AG04450 (cell line): ENCODE measurements at regions of chr5 and their contacts with region 1.

Region 1: DNA sequence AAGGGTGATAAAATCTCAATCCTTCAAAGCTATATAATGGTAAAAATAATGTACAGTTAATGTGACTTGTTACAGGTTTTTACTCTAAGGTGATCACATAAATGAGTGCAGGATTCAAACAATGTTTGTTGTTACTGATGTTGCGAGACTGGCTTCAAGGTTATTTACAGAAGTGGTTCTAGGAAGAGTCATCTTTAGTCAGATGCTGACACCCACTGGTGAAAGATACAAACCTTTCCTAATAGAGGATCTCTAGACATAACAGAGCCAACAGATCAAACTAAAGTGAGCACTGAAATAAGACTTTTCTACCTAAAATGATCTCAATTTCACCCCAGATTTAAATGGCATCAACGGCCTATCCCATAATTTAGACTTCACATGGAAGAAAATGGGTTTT is 20.2 kb downstream of the ARSB start:
- DNase-seq: peak; percentile 59
- H3K4me3 ChIP-seq: no peak overlapping the region
- H3K27ac ChIP-seq: no peak overlapping the region
- H3K27me3 ChIP-seq: no peaks in the 10 kb centered on the region
- CTCF ChIP-seq: peak; percentile 63

Region 2: DNA sequence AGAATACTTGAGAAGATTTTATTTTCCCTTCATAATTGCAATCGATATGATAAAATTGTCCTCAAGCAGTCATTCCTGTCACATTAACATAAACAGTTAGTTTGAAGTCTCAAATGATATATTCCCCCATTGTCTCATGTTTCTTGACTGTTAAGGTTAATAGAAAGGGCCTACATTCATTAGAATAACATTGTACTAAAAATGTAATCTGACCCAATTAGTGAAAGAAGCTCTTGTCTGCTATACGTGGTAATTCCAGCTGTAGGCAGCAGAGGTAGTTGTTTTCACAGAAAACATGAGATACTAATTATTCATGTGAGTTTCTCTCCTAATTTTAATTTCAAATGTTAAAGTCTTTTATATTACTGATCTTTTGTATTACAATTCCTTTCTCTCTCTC is 644.5 kb before region 1 on chr5:
- CTCF ChIA-PET with region 1: interaction called, 12 read pairs
- POLR2A ChIA-PET with region 1: no interaction called
- DNase-seq: peak; percentile 26
- H3K4me3 ChIP-seq: no peak overlapping the region
- H3K27ac ChIP-seq: no peak overlapping the region
- H3K27me3 ChIP-seq: no peaks in the 10 kb centered on the region
- CTCF ChIP-seq: peak; percentile 76

Region 3: GRCh38 chr5:78537821-78538220 is 427.1 kb before region 1 on chr5:
- CTCF ChIA-PET with region 1: interaction called, 14 read pairs
- POLR2A ChIA-PET with region 1: no interaction called
- DNase-seq: no peak
- H3K4me3 ChIP-seq: no peak overlapping the region
- H3K27ac ChIP-seq: no peak overlapping the region
- H3K27me3 ChIP-seq: no peaks in the 10 kb centered on the region
- CTCF ChIP-seq: peak; percentile 67

Region 4: GRCh38 chr5:78899922-78900362 is 64.9 kb before region 1 on chr5:
- CTCF ChIA-PET with region 1: interaction called, 104 read pairs
- POLR2A ChIA-PET with region 1: no interaction called
- DNase-seq: no peak
- H3K4me3 ChIP-seq: no peak overlapping the region
- H3K27ac ChIP-seq: no peak overlapping the region
- H3K27me3 ChIP-seq: no peaks in the 10 kb centered on the region
- CTCF ChIP-seq: peak; percentile 77

Region 5: GRCh38 chr5:79069488-79070349 is 104.8 kb after region 1 on chr5 and contains the starts of genes BHMT2 and DMGDH:
- CTCF ChIA-PET with region 1: no interaction called
- POLR2A ChIA-PET with region 1: no interaction called
- DNase-seq: no peak
- H3K4me3 ChIP-seq: peak within 1 kb of the TSS; percentile 46
- H3K27ac ChIP-seq: peak within 1 kb of the TSS; percentile 52
- H3K27me3 ChIP-seq: no peaks in the 10 kb centered on the region
- CTCF ChIP-seq: no peak
- polyA plus RNA-seq, gene BHMT2: 8.9 and 9.6 TPM in 2 replicates
- polyA plus RNA-seq, gene DMGDH: 1.7 and 1.9 TPM in 2 replicates

Region 6: GRCh38 chr5:79378510-79379186 is 413.8 kb after region 1 on chr5:
- CTCF ChIA-PET with region 1: no interaction called
- POLR2A ChIA-PET with region 1: no interaction called
- DNase-seq: no peak
- H3K4me3 ChIP-seq: no peak overlapping the region
- H3K27ac ChIP-seq: no peak overlapping the region
- H3K27me3 ChIP-seq: no peaks in the 10 kb centered on the region
- CTCF ChIP-seq: no peak